Stomach (tissue), 19 donors: ENCODE measurements at regions of chr10 and their contacts with region 1.

Region 1: GRCh38 chr10:72834183-72834825 is 59.2 kb upstream of the OIT3 start:
- DNase-seq: peak; percentile 43 to 89
- H3K4me3 ChIP-seq: no peak overlapping the region
- H3K27ac ChIP-seq: peak overlapping the region in 1 of 5 donors; percentile 38
- H3K4me1 ChIP-seq: peaks cover 13 to 61% (median 35%) of the 10 kb centered on the region in 4 donors
- H3K27me3 ChIP-seq: no peaks in the 10 kb centered on the region
- CTCF ChIP-seq: peak in 5 of 7 experiments; percentile 42 to 66 (median 53)
- EP300 ChIP-seq: no peak
- POLR2A ChIP-seq: no peak

Region 2: GRCh38 chr10:72364239-72364777 is 470.0 kb before region 1 on chr10:
- intact Hi-C with region 1: loop called (anchors 10 kb)
- DNase-seq: peak; percentile 91 to 95
- H3K4me3 ChIP-seq: peak overlapping the region in 2 of 4 donors; percentile 4 to 7
- H3K27ac ChIP-seq: peak overlapping the region; percentile 9 to 48 (median 44)
- H3K4me1 ChIP-seq: peaks cover 5 to 16% (median 11%) of the 10 kb centered on the region in 4 donors
- H3K27me3 ChIP-seq: no peaks in the 10 kb centered on the region
- CTCF ChIP-seq: peak in 5 of 7 experiments; percentile 87 to 99 (median 91)
- EP300 ChIP-seq: no peak
- POLR2A ChIP-seq: no peak

Region 3: DNA sequence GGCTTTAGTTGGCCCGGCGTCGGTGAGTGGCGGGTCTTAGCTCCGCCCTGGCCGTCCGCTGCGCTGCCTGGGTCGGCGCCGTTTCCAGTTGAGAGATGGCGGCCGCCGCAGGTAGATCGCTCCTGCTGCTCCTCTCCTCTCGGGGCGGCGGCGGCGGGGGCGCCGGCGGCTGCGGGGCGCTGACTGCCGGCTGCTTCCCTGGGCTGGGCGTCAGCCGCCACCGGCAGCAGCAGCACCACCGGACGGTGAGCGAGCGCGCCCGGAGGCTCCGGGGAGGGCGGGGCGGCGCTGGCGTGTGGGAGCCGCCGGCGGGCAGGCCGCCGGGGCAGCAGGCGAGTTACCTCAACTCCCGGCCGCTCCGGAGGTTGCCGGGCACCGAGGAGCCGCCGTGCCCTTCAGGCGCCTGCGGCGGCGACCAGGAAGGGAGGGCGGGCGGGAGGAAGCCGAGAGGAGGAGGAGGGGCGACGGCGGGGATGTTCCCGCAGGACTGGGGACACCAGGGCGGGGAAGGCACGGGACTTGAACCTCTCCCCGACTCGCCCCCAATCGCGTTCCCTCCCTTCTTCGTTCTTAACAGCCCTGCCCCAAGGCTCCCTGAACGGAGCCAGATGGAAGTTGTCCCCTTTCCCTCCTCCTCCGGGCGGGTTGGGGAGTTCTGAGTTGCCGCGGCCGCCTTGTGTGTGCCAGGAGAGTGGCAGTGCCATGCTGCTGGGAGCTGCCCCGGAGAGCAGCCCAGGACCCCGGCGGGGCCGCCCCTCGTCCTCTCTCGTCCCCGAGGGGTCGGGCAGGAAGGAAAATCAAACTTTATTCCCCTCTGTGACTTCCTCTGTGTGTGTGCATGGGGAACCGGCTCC is 142.0 kb before region 1 on chr10 and contains the start of gene MCU:
- intact Hi-C with region 1: loop called (anchors 10 kb)
- DNase-seq: peak; percentile 97 to 98
- H3K4me3 ChIP-seq: peak within 1 kb of the TSS; percentile 59 to 87 (median 80)
- H3K27ac ChIP-seq: peak within 1 kb of the TSS; percentile 91 to 98 (median 96)
- H3K4me1 ChIP-seq: peaks cover 11 to 56% (median 34%) of the 10 kb centered on the region in 4 donors
- H3K27me3 ChIP-seq: no peaks in the 10 kb centered on the region
- CTCF ChIP-seq: no peak
- EP300 ChIP-seq: no peak
- POLR2A ChIP-seq: no peak
- total RNA-seq, gene MCU: 15.2 to 90.1 (median 33.9) TPM

Region 4: DNA sequence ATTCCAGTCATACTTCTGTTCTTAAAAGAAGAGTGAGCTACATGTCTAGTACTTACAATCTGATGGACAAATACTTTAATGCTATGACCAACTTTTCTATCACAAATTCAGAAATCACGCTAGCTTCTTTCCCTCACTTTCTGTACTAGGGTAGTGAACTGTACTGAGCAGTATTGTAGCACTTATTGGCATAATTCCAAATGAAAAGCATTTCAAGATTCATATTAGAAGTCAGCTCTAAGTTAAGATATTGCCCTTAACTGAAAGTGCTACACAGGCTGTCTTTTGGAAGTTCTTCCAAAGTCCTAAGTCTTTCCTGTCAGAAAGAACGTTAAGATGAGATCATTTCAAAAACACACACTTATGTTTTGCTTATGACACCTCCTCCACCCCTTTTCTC is 248.9 kb after region 1 on chr10:
- intact Hi-C with region 1: no loop called
- DNase-seq: peak in 1 of 2 donors; percentile 13
- H3K4me3 ChIP-seq: no peak overlapping the region
- H3K27ac ChIP-seq: peak overlapping the region in 1 of 5 donors; percentile 37
- H3K4me1 ChIP-seq: peaks cover 8 to 57% (median 19%) of the 10 kb centered on the region in 4 donors
- H3K27me3 ChIP-seq: no peaks in the 10 kb centered on the region
- CTCF ChIP-seq: no peak
- EP300 ChIP-seq: no peak
- POLR2A ChIP-seq: no peak

Region 5: GRCh38 chr10:73096449-73097304 is 262.4 kb after region 1 on chr10 and contains the start of gene P4HA1:
- intact Hi-C with region 1: no loop called
- DNase-seq: peak; percentile 99
- H3K4me3 ChIP-seq: peak within 1 kb of the TSS; percentile 66 to 91 (median 84)
- H3K27ac ChIP-seq: peak within 1 kb of the TSS; percentile 94 to 98 (median 97)
- H3K4me1 ChIP-seq: peaks cover 7 to 34% (median 23%) of the 10 kb centered on the region in 4 donors
- H3K27me3 ChIP-seq: no peaks in the 10 kb centered on the region
- CTCF ChIP-seq: peak in 6 of 7 experiments; percentile 19 to 73 (median 55)
- EP300 ChIP-seq: no peak
- POLR2A ChIP-seq: peak in 2 of 4 donors; percentile 38 to 75
- total RNA-seq, gene P4HA1: 11.7 to 68.3 (median 26.8) TPM